GM13976 (cell line): ENCODE measurements at regions of chr11 and their contacts with region 1.

Region 1: GRCh38 chr11:119666463-119667131 is 62.4 kb downstream of the NECTIN1 start:
- DNase-seq: peak; percentile 90
- CTCF ChIP-seq: peak; percentile 85

Region 2: GRCh38 chr11:119878990-119879389 is 212.4 kb after region 1 on chr11:
- in situ Hi-C with region 1: no loop called
- DNase-seq: no peak
- CTCF ChIP-seq: no peak

Region 3: DNA sequence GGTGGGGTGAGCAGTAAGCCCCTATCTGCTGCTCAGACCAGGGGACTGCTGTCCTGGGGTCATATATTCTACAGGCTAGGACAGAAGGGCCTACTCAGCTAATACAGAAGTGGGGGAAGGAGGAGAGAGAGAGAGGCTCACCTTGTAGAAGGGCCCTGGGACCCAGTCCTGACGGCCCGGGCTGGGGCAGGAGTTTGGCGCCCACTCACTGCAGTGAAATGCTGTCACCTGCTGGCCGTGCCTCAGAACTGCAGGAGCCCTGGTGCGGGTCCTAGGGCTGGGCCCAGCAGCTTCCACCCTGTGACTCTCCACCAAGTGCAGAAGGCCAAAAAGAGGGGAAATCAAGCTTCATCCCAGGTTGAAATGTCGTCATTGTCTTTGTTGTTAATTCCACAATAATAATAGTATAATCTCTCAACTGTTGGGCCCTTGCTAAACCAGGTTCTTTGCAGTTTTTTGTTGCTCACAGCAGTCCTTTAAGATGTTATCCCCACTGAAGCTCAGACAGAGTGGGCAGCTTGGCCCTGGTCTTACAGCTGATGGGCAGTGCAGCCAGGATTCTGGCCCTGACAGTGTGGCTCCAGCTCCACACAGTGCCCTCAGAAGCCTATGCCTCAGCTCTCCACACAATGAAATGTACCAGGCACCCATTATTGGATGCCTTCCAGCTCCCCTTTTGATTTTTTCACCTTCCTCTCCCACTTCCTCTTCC is 441.7 kb after region 1 on chr11:
- in situ Hi-C with region 1: loop called (anchors 10 kb)
- DNase-seq: peak; percentile 91
- CTCF ChIP-seq: peak; percentile 97

Region 4: GRCh38 chr11:120182790-120183491 is 516.3 kb after region 1 on chr11:
- in situ Hi-C with region 1: no loop called
- DNase-seq: no peak
- CTCF ChIP-seq: peak; percentile 12